ENCODE measurements at regions of chr10 and their contacts with region 1.

Region 1: DNA sequence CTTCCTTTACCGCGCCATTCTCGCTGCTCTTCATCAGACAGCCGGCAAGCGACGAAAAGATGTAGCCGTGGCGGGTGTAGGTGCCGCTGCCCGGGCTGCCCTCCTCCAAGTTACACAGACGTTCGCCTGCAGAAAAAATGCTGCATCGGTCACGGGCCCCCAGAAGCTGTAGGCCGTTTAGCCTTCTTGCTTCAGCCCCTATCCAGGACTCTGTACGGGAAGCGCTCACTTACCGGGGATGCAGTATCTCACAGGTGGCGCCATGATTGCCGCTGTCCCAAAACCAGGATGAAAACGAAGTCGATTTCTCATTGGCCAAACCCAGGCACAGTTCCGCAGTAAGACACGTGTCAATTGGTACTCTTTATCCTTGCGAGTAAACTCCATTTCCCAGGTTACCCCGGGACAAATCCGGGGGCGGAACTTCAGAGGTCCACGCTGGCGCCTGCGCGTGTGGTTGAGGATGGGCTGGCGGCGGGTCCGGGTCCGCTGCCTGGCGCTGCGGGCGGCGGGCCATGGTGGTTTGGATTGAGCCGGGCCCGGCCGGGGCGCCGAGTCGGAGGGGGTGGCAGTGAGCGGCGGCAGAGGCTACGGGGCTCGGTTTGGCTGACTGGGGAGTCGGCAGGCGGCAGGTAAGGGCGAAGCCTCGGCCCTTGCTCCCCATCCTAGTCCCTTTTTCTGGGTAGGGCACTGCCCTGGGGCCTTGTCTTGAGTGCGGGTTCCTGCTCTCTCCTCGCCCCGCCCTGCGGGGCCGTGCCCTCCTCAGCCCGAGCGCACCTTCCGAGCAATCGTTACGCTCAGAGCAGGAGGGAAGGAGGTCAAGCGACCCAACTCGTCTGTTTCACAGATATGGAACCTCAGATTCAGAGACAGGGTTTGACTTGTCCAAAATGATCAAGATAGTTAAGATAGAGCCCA is at the starts of genes EXOSC1 and ZDHHC16:
- DNase-seq: peak; percentile 86 to 94
- H3K4me3 ChIP-seq: peak within 1 kb of the TSS; percentile 78 to 98 (median 87)
- H3K27ac ChIP-seq: peak within 1 kb of the TSS; percentile 78
- H3K4me1 ChIP-seq: peaks cover 0 to 8% (median under 1%) of the 10 kb centered on the region in 4 experiments; a peak in 5 of 7 replicates
- H3K27me3 ChIP-seq: no peaks in the 10 kb centered on the region
- CTCF ChIP-seq: peak in 1 of 3 experiments; percentile 1; a peak in 1 of 4 replicates
- EP300 ChIP-seq: no peak
- POLR2A ChIP-seq: peak; percentile 63 to 86
- RAD21 ChIP-seq: no peak; a peak in 1 of 4 replicates
- total RNA-seq, gene EXOSC1: 52.1 and 53.6 TPM in 2 replicates
- total RNA-seq, gene ZDHHC16: 45.9 and 50.4 TPM in 2 replicates

Region 2: DNA sequence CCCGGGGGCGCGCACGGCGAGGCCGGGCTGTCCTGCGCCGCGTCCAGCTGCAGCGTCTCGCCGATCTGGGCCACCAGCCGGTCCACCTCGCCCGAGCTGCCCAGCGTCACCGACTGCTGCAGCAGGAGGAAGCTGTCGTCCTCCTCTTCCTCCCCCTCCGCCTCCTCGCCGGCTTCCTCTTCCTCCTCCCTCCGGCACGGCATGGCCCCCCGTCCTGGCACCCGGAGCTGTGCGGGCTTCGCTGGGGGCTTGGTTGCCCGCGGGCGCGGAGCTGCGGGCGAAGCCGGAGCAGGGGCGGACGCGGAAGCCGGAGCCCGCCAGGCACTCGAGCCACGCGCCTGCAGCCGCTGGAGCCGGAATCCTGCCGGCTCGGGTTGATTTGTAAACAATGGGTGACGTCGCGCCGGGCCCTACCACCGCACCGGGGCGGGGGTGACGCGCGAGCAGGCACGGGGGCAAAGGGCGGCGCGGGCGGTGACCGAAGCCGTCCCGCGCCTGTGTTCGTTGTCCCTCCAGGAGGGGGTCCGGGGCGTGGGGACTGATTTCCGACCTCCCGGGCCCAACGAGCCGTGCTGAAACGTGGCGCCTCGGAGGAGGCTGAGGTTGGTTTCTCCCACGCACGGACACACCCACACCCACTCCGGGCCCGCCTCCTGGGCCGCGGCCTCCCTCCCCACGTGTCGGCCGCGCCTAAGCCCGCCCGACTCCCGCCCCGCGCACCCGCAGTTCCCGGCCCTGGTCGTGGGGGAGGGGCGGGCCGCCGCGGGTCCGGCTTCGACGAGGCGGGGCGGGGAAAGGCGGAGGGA is 111.4 kb before region 1 on chr10 and contains the start of gene FRAT2:
- CTCF ChIA-PET with region 1: no interaction called
- POLR2A ChIA-PET with region 1: no interaction called
- DNase-seq: peak in 1 of 2 experiments; percentile 95
- H3K4me3 ChIP-seq: peak within 1 kb of the TSS; percentile 84 to 92 (median 91)
- H3K27ac ChIP-seq: peak within 1 kb of the TSS; percentile 99
- H3K4me1 ChIP-seq: peaks cover 8 to 22% (median 12%) of the 10 kb centered on the region in 4 experiments
- H3K27me3 ChIP-seq: no peaks in the 10 kb centered on the region
- CTCF ChIP-seq: no peak
- EP300 ChIP-seq: peak in 1 of 2 experiments; percentile 93; a peak in 2 of 3 replicates
- POLR2A ChIP-seq: peak; percentile 69 to 84
- RAD21 ChIP-seq: no peak
- total RNA-seq, gene FRAT2: 83.0 and 87.7 TPM in 2 replicates

Region 3: DNA sequence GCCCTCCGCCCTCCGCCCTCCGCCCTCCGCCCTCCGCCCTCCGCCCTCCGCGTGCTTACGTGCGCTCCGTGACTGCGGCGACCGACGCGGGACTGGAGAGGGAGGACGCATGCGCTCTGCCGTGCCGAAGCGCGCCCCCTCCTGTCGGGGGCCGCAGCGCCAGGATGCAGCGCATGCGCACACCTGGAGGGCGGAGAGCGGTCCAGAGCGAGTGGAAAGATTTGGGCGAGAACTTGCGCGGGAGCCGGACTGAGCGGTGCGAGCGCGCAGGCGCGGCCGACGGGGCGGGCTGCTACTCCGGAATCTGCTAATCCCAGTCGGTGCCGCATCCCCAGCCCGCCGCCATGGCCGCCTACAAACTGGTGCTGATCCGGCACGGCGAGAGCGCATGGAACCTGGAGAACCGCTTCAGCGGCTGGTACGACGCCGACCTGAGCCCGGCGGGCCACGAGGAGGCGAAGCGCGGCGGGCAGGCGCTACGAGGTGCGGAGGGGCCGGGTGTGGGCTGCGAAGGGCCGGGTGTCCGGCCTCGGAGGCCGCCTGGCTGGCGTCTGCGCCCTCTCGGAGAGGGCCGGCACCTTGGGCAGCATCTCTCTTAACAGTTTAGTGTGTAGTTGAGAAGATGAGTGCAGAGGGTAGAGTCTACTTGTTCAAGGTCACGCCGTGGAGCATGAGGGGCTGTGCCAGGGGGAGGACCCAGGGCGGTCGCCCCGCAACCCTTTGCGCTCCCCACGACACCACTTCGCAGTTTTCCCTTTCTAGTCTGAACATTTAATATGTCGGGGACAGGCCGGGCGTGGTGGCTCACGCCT is 19.8 kb before region 1 on chr10 and contains the start of gene PGAM1:
- CTCF ChIA-PET with region 1: interaction called, 6 read pairs
- POLR2A ChIA-PET with region 1: interaction called, 185 read pairs
- DNase-seq: peak; percentile 94 to 96
- H3K4me3 ChIP-seq: peak within 1 kb of the TSS; percentile 69 to 100 (median 95)
- H3K27ac ChIP-seq: peak within 1 kb of the TSS; percentile 87
- H3K4me1 ChIP-seq: peaks cover 3 to 6% (median 4%) of the 10 kb centered on the region in 4 experiments; a peak in 6 of 7 replicates
- H3K27me3 ChIP-seq: no peaks in the 10 kb centered on the region
- CTCF ChIP-seq: peak; percentile 72 to 89 (median 85)
- EP300 ChIP-seq: no peak
- POLR2A ChIP-seq: peak; percentile 46 to 75
- RAD21 ChIP-seq: peak in 1 of 2 experiments; percentile 12; a peak in 1 of 4 replicates
- total RNA-seq, gene PGAM1: 799 and 819 TPM in 2 replicates

Measured in H1 (cell line).